CD4-positive, alpha-beta T cell (primary cell): ENCODE measurements at regions of chr19 and their contacts with region 1.

Region 1: GRCh38 chr19:47210689-47211316 is 20.2 kb downstream of the BBC3 start:
- DNase-seq: peak; percentile 59 to 91 (median 80)
- ATAC-seq: peak; percentile 97
- H3K4me3 ChIP-seq: no peak overlapping the region
- H3K4me3 Mint-ChIP-seq: no peak overlapping the region
- H3K27ac ChIP-seq: no peak overlapping the region
- H3K27ac Mint-ChIP-seq: peak overlapping the region; percentile 4
- H3K4me1 ChIP-seq: peaks cover 10% of the 10 kb centered on the region
- H3K4me1 Mint-ChIP-seq: peaks cover 13% of the 10 kb centered on the region
- H3K27me3 ChIP-seq: no peaks in the 10 kb centered on the region
- H3K27me3 Mint-ChIP-seq: no peaks in the 10 kb centered on the region
- CTCF ChIP-seq: peak; percentile 90

Region 2: DNA sequence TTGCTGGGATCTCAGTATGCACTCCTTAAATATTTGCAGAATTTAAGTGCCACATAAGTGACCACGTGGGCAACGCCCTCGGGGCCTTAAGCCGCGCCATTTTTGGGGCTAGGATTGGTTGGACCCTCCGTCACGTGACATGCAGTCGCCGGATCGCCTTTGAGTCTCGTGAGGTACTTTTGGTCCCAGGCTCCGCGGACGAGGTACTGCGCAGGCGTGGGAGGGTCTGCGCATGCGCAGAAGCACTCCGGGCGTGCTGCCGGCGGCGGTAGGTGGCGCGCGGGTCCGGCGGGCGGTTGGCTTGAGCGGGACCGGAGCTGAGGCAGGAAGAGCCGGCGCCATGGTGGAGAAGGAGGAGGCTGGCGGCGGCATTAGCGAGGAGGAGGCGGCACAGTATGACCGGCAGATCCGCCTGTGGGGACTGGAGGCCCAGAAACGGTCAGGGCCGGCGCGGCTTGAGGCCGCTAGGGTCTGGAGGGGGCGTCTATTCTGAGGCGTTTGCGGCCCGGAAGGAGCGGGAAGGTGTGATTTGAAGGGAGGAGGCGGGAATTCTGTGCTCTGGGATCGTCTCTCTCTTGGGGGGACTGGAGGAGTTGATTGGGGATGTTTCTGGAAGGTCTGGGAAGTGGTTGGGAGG is 80.1 kb before region 1 on chr19 and contains the start of gene SAE1:
- CTCF ChIA-PET with region 1: interaction called, 12 read pairs
- POLR2A ChIA-PET with region 1: no interaction called
- intact Hi-C with region 1: no loop called
- DNase-seq: peak; percentile 82 to 98 (median 92)
- ATAC-seq: peak; percentile 91
- H3K4me3 ChIP-seq: peak within 1 kb of the TSS; percentile 95
- H3K4me3 Mint-ChIP-seq: peak within 1 kb of the TSS; percentile 96
- H3K27ac ChIP-seq: peak within 1 kb of the TSS; percentile 68 to 74
- H3K27ac Mint-ChIP-seq: peak within 1 kb of the TSS; percentile 83
- H3K4me1 ChIP-seq: peaks cover 44% of the 10 kb centered on the region
- H3K4me1 Mint-ChIP-seq: peaks cover 52% of the 10 kb centered on the region
- H3K27me3 ChIP-seq: no peaks in the 10 kb centered on the region
- H3K27me3 Mint-ChIP-seq: no peaks in the 10 kb centered on the region
- CTCF ChIP-seq: peak; percentile 73
- total RNA-seq, gene SAE1: 29.6 to 30.9 TPM

Region 3: DNA sequence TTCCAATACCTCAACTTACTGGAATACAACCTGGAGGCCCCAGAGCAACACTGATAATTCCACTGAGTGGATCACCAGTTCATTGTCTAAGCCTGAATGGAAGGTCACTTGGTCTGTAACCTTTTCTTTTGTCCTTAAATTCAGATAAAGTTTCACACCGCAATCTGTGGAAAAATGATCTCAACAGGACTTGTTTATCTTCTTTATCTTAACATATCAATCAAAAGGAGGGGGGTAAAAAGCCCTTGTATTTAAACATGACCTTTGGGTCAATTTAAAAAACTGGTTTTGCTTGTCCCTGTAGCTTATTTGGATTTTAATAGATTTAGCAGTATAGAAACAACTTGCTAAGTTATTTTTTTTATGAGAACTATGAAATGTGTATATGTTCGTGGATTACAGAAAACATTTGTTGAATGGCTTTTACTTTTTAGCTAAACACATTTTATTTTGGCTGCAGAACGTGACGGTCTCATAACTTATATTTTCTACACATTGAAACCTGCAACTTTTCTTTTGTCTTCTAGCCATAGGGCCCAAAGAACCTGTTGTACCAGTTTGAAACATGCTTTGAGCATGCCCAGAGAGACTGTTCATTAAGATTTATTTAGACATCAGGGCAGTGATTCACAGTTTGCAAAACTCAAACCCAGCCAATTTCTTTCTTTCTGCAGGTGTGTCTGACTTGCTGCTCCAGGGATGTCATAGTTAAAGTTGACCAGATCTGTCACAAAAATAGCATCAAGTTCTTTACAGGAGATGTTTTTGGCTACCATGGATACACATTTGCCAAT is 58.4 kb before region 1 on chr19:
- CTCF ChIA-PET with region 1: interaction called, 41 read pairs
- POLR2A ChIA-PET with region 1: interaction called, 19 read pairs
- intact Hi-C with region 1: loop called (anchors 1 kb)
- DNase-seq: no peak
- ATAC-seq: no peak
- H3K4me3 ChIP-seq: no peak overlapping the region
- H3K4me3 Mint-ChIP-seq: no peak overlapping the region
- H3K27ac ChIP-seq: no peak overlapping the region
- H3K27ac Mint-ChIP-seq: peak overlapping the region; percentile 27
- H3K4me1 ChIP-seq: peaks cover 49% of the 10 kb centered on the region
- H3K4me1 Mint-ChIP-seq: peaks cover 51% of the 10 kb centered on the region
- H3K27me3 ChIP-seq: no peaks in the 10 kb centered on the region
- H3K27me3 Mint-ChIP-seq: no peaks in the 10 kb centered on the region
- CTCF ChIP-seq: no peak

Region 4: GRCh38 chr19:47176627-47177090 is 34.1 kb before region 1 on chr19:
- CTCF ChIA-PET with region 1: interaction called, 6 read pairs
- POLR2A ChIA-PET with region 1: interaction called, 31 read pairs
- intact Hi-C with region 1: no loop called
- DNase-seq: peak in 11 of 14 experiments; percentile 22 to 82 (median 43)
- ATAC-seq: peak; percentile 85
- H3K4me3 ChIP-seq: peak overlapping the region; percentile 6
- H3K4me3 Mint-ChIP-seq: peak overlapping the region; percentile 81
- H3K27ac ChIP-seq: peak overlapping the region; percentile 60 to 68
- H3K27ac Mint-ChIP-seq: peak overlapping the region; percentile 98
- H3K4me1 ChIP-seq: peaks cover 56% of the 10 kb centered on the region
- H3K4me1 Mint-ChIP-seq: peaks cover 69% of the 10 kb centered on the region
- H3K27me3 ChIP-seq: no peaks in the 10 kb centered on the region
- H3K27me3 Mint-ChIP-seq: no peaks in the 10 kb centered on the region
- CTCF ChIP-seq: no peak

Region 5: DNA sequence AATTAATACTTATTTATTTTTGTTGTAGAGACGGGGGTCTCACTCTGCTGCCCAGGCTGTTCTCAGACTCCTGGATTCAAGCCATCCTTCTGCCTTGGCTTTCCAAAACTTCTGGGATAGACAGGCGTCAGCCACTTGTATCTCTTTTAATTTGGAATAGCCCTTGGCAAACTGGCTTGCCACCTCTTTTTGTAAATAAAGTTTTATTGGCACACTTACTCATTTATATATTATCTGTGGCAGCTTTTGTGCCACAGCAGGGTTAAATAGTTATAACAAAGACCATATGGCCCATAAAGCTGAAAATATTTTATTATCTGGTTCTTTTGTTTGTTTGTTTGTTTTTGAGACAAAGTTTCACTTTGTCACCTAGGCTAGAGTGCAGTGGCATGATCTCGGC is 10.3 kb before region 1 on chr19:
- CTCF ChIA-PET with region 1: interaction called, 11 read pairs
- POLR2A ChIA-PET with region 1: interaction called, 3 read pairs
- intact Hi-C with region 1: no loop called
- DNase-seq: no peak
- ATAC-seq: no peak
- H3K4me3 ChIP-seq: no peak overlapping the region
- H3K4me3 Mint-ChIP-seq: no peak overlapping the region
- H3K27ac ChIP-seq: no peak overlapping the region
- H3K27ac Mint-ChIP-seq: no peak overlapping the region
- H3K4me1 ChIP-seq: peaks cover 3% of the 10 kb centered on the region
- H3K4me1 Mint-ChIP-seq: peaks cover 20% of the 10 kb centered on the region
- H3K27me3 ChIP-seq: no peaks in the 10 kb centered on the region
- H3K27me3 Mint-ChIP-seq: no peaks in the 10 kb centered on the region
- CTCF ChIP-seq: no peak

Region 6: GRCh38 chr19:47381653-47382279 is 171.0 kb after region 1 on chr19:
- CTCF ChIA-PET with region 1: no interaction called
- POLR2A ChIA-PET with region 1: no interaction called
- intact Hi-C with region 1: no loop called
- DNase-seq: peak in 5 of 14 experiments; percentile 8 to 67 (median 43)
- ATAC-seq: no peak
- H3K4me3 ChIP-seq: no peak overlapping the region
- H3K4me3 Mint-ChIP-seq: no peak overlapping the region
- H3K27ac ChIP-seq: peak overlapping the region; percentile 16 to 49
- H3K27ac Mint-ChIP-seq: peak overlapping the region; percentile 30
- H3K4me1 ChIP-seq: peaks cover 17% of the 10 kb centered on the region
- H3K4me1 Mint-ChIP-seq: peaks cover 28% of the 10 kb centered on the region
- H3K27me3 ChIP-seq: no peaks in the 10 kb centered on the region
- H3K27me3 Mint-ChIP-seq: no peaks in the 10 kb centered on the region
- CTCF ChIP-seq: no peak

Region 7: DNA sequence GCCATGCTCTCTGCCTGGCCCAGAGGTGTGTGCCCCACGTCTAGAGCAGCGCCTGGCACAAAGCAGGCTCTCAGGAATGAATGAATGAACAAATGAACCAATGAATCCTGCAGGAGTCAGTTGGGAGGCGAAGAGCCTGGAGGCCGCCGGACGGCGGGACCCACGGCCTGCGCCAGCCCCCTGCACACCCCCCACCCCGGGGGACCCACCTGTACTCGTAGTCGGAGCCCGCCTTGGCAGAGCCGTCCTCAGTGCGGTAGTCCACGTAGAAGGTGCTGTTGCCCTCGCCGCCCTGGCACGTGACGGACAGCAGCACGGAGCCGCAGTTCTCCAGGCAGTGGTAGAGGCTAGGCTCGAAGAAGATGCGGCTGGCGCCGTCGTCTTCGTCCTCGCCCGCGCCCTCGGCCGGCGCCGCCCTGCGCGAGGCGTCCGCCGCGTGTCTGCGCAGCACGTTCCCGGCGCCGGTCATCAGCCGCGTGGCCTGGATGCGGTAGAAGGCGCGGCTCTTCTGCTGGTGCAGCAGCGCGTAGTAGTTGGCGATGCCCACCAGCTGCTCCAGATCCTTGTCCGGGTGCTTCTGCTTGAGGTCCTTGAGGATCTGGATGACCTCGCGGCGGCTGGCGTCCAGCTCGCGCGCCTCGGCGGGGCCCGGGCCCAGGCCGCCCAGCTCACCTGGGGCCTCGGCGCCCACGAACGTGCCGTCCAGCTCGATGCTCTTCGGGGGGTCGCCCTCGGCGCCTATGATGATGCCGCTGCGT is 246.1 kb after region 1 on chr19:
- CTCF ChIA-PET with region 1: no interaction called
- POLR2A ChIA-PET with region 1: no interaction called
- intact Hi-C with region 1: no loop called
- DNase-seq: no peak
- ATAC-seq: no peak
- H3K4me3 ChIP-seq: no peak overlapping the region
- H3K4me3 Mint-ChIP-seq: no peak overlapping the region
- H3K27ac ChIP-seq: no peak overlapping the region
- H3K27ac Mint-ChIP-seq: no peak overlapping the region
- H3K4me1 ChIP-seq: peaks cover 3% of the 10 kb centered on the region
- H3K4me1 Mint-ChIP-seq: no peaks in the 10 kb centered on the region
- H3K27me3 ChIP-seq: peaks cover 53 to 59% of the 10 kb centered on the region in 2 experiments
- H3K27me3 Mint-ChIP-seq: peaks cover 39% of the 10 kb centered on the region
- CTCF ChIP-seq: no peak